Activated CD4-positive, alpha-beta T cell treated with anti-CD3 and anti-CD28 coated beads for 36 hours (primary cell): ENCODE measurements at regions of chr7 and their contacts with region 1.

Region 1: DNA sequence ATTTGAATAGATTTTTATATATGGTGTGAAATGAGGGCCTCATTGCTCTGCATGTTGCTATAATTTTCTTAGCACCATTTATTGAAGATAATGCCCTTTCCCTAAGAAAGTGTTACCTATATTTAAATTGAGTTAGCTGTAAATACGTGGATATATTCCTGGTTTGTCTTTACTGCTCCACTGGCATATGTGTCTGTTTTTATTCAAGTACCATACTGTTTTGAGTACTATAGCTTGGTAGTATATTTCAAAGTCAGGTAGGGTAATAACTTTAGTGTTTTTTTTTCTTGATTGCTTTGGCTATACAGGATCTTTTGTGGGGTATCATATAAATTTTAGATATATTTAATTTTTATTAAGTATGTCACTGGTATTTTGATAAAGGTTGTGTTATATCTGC is 31.4 kb downstream of the ZNF273 start:
- DNase-seq: no peak
- ATAC-seq: no peak
- H3K4me3 Mint-ChIP-seq: no peak overlapping the region
- H3K27ac Mint-ChIP-seq: no peak overlapping the region
- H3K4me1 Mint-ChIP-seq: peaks cover 2% of the 10 kb centered on the region
- H3K27me3 Mint-ChIP-seq: no peaks in the 10 kb centered on the region

Region 2: GRCh38 chr7:64978497-64979203 is 44.2 kb after region 1 on chr7:
- CTCF ChIA-PET with region 1: interaction called, 3 read pairs
- POLR2A ChIA-PET with region 1: no interaction called
- intact Hi-C with region 1: loop called in 1 of 2 experiments (anchors 5 kb)
- DNase-seq: no peak
- ATAC-seq: no peak
- H3K4me3 Mint-ChIP-seq: no peak overlapping the region
- H3K27ac Mint-ChIP-seq: no peak overlapping the region
- H3K4me1 Mint-ChIP-seq: no peaks in the 10 kb centered on the region
- H3K27me3 Mint-ChIP-seq: no peaks in the 10 kb centered on the region